ENCODE measurements at regions of chr19 and their contacts with region 1.

Region 1: DNA sequence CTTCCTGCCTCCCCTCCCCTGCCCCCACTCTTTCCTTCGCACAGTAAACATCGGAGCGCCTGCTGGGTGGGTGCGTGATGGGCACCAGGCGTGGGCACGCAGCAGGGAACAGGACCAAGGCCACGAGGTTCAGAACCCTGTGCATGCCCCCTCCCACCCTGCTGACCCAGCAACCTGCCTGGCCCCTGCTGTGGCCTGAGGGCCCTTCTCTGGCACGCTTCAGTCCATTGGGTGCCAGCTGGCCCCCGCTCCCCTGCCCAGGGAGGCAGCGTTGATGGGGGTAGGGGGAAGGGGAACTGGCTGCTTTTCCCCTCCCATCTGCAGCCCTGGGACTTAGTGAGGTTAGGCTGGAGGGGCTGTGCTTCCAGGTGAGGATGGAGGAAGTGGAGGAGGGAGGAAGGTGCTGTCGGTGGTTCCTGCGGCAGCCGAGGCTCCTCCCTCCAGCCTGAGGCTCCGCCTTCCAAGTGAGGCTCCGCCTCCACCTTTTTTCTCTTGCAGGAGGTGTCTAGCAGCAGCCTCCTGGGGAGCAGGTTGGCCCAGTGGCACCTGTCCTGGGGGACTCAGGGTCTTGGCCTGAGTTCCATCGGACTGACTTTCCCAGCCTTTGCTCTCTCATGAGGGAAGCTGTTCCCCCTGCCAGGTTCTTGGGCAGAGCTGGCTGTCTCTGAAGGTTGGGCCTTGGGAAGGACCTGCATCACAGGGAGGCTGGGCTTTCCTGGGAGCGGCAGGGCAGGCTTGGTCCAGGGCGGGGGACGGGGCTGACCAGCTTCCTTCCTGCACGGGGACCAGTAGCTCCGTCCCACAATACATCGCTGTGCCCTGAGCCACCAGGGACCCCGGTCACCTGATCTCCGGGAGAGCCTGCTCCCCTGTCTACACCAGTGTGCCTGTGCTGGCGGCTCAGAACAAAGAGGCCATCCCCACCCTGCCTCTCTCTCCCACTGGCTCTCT is 7.3 kb downstream of the PIAS4 start:
- DNase-seq: peak; percentile 46
- ATAC-seq: peak; percentile 44 to 62

Region 2: DNA sequence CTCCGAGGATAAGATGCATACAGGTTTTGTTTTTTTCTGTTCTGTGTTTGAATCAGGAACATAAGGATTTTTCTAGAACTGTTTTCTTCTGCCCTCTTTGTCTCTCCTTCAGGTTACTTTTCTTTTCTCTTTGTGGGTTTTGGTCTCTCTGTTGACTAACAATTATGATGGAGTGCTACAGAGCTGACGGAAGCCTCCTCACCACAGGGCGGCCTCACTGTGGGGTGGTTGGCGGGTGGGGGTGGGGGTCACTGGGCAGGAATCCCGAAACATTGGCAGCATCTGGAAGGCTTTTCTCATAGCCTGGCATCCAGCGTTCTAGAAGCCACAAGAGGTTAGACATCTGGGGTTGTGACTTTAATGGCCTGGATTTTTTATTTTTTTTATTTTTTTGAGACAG is 216.7 kb before region 1 on chr19:
- intact Hi-C with region 1: no loop called
- DNase-seq: no peak
- ATAC-seq: no peak

Region 3: DNA sequence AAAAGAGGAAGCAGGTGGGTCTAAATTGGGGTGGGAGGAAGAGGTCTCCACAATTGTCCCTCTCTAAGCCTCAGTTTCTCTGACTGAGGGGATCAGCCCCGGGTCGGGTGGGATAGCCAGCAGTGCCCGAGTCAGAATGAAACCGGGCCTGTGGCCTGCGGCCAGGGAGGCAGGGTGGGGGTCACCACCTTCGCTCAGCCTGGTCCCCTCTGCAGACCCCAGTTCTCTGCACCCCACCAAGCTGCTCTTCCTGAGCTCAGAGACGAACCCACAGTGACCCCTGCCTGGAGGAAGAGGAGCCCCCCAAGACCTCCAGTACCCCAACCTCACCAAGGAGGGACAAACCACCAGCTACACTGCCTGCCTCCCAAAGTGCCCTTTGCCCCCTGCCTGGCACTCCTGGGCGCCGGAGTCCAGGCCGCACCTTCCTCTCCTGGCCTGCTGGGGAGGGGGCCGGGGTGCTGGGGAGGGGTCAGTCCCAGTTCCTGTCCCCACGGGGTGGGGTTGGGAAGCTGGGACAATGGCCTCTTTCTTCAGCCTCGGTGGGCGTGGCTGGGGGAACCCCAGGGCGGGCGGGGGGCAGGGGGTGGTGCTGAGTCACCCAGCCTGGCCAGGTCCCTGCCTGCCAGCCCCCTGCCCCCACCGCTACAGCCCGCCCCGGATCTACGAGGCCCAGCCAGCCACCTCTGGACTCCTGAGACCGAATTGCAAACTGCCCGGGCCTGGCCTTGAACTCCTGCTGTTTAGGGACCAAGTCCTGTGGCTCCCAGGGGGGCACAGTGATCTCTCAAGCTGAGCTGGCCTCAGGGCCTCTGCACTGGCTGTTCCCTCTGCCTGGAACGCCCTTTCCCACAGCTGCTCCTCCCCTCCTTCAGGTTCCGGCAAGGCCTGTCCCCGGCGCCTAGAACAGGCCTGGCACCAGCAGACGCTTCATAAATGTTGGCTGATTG is 37.5 kb after region 1 on chr19:
- intact Hi-C with region 1: loop called in 1 of 2 experiments (anchors 5 kb)
- DNase-seq: peak; percentile 75
- ATAC-seq: peak; percentile 30 to 44